AG04450 (cell line): ENCODE measurements at regions of chr19 and their contacts with region 1.

Region 1: DNA sequence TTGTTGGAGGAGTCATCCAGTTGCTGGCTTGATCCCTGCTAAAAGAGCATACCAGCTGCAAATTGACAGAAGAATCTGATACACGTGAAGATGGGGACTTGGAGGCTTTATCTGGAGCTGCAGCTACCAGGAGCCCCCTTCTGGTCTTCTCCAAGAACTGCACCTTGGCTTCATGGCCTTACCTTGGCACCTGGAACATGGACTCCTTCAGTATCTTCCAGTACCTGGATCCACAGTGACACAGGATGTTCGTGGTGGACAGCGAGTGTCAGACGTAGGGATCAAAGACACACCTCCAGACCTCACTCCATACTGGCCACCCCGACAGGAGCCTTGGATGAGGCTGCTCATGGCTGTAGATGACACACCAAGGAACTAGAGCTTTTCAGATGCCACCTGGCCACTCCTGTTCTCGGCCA is 9.9 kb upstream of the ACSBG2 start:
- DNase-seq: peak; percentile 48
- H3K4me3 ChIP-seq: no peak overlapping the region
- H3K27ac ChIP-seq: no peak overlapping the region
- H3K27me3 ChIP-seq: no peaks in the 10 kb centered on the region
- CTCF ChIP-seq: peak; percentile 98

Region 2: GRCh38 chr19:5987077-5987818 is 138.3 kb before region 1 on chr19:
- CTCF ChIA-PET with region 1: interaction called, 12 read pairs
- POLR2A ChIA-PET with region 1: interaction called, 7 read pairs
- DNase-seq: peak; percentile 51
- H3K4me3 ChIP-seq: peak overlapping the region; percentile 53
- H3K27ac ChIP-seq: no peak overlapping the region
- H3K27me3 ChIP-seq: no peaks in the 10 kb centered on the region
- CTCF ChIP-seq: peak; percentile 95